ENCODE measurements at regions of chr12 and their contacts with region 1.

Region 1: DNA sequence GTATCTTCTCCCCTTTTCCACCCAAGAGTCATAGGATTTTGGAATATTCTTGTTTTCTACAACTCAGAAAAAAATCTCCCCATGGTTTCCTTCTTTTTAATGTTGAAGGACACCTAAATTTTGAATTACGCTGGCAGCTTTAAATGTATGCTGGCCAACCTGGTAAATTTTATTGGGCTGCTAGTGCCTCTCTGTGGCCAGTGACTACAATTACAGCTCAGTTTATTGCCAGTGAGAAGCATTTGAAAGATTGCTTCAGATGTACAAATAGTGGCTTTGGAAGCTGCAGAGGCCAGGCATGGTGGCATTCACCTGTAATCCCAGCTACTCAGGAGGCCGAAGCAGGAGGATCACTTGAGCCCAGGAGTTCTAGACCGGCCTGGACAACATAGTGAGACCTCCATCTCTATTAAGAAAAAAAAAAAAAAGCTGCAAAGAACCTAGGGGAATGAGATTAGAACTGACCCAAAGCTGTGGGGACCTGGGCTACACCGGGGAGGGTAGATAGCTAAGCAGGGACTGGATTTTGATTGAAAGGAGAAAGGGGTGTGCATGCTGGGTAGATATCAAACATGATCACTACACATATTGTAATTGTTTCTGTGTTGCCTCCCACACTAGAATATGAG is 7.6 kb upstream of the RAB21 start:
- DNase-seq: peak; percentile 23
- H3K4me3 ChIP-seq: no peak overlapping the region
- H3K27ac ChIP-seq: no peak overlapping the region
- H3K4me1 ChIP-seq: no peaks in the 10 kb centered on the region
- H3K27me3 ChIP-seq: no peaks in the 10 kb centered on the region
- CTCF ChIP-seq: peak; percentile 54 to 62 (median 58)
- POLR2A ChIP-seq: no peak

Region 2: DNA sequence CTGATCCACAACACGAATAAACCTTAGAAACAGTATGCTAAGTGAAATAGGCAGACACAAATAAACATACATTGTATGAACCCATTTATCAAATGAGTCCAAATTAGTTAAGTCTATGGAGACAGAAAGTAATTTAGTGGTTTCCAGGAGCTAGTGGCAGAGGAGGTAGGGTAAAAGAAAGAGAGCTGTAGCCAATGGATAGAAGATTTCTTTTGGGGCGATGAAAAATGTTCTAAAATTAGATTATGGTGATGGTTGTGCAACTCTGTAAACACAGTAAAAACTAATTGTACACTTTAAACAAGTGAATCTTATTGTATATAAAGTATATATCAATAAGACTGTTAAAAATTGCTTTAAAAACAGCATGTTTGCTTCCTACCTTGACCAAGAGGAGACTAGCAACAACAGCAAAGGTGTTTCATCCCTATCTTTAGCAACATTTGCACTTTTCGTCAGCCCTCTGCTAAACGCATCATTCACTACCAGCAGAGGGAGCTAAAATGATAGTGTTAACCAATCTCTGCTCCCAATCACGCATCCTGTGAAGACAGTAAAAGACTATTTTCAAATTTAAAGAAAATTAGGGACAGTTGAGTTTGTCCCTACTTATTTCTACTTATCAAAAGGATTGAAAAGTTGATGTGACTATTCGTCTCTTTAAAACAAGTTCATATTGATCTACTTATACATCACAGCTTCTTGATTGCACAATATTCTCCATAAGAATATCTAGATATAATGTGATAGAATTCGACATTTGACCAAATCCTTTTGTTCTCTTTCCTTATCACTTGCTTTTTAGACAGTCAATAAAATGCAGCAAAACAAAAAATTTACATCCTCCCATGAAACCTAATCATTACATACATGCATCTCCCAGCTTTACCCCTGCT is 331.5 kb before region 1 on chr12:
- intact Hi-C with region 1: loop called (anchors 10 kb)
- DNase-seq: peak; percentile 25
- H3K4me3 ChIP-seq: no peak overlapping the region
- H3K27ac ChIP-seq: no peak overlapping the region
- H3K4me1 ChIP-seq: no peaks in the 10 kb centered on the region
- H3K27me3 ChIP-seq: no peaks in the 10 kb centered on the region
- CTCF ChIP-seq: peak; percentile 21 to 69 (median 54)
- POLR2A ChIP-seq: no peak

Region 3: DNA sequence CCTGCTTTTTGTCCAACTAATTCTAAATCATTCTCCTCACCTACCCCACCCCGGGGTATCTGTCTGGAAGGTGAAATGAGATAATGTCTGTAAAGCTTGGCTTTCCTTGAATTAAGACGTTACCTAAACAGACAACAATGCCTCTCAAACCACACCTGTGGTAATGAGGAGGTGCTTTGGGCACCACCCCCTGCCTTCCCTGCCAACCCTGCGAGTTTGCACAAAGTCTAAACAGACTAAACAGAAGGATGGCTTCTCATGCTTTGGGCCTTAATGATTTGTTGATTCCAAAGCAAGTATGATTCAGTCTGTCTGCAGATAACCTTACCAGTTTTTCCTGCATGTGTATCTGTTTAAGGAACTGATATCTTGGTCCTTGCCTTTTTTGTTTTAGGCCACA is 165.9 kb before region 1 on chr12:
- intact Hi-C with region 1: no loop called
- DNase-seq: no peak
- H3K4me3 ChIP-seq: no peak overlapping the region
- H3K27ac ChIP-seq: no peak overlapping the region
- H3K4me1 ChIP-seq: no peaks in the 10 kb centered on the region
- H3K27me3 ChIP-seq: no peaks in the 10 kb centered on the region
- CTCF ChIP-seq: no peak
- POLR2A ChIP-seq: no peak

Region 4: GRCh38 chr12:71710276-71711125 is 36.6 kb before region 1 on chr12:
- intact Hi-C with region 1: no loop called
- DNase-seq: no peak
- H3K4me3 ChIP-seq: no peak overlapping the region
- H3K27ac ChIP-seq: no peak overlapping the region
- H3K4me1 ChIP-seq: no peaks in the 10 kb centered on the region
- H3K27me3 ChIP-seq: no peaks in the 10 kb centered on the region
- CTCF ChIP-seq: no peak
- POLR2A ChIP-seq: no peak

Region 5: DNA sequence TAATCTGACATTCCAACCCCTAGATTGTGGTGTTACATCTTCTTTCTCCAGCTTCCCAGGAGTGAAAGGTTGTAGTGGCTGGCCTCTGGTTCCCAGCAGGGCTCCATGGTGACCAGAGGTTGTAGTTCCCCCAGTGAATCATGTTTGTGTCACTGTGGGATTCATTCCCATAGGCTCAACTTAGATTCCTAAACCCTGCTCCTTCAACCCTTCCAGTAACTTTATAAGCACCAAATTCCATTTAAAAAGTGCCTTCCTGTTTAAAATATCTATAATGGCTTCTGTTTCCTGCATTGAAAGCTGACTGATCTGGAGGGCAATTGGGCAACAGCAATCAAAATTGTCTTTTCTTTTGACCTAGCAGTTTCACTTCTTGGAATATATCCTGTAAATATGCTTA is 52.0 kb after region 1 on chr12:
- intact Hi-C with region 1: no loop called
- DNase-seq: no peak
- H3K4me3 ChIP-seq: no peak overlapping the region
- H3K27ac ChIP-seq: no peak overlapping the region
- H3K4me1 ChIP-seq: no peaks in the 10 kb centered on the region
- H3K27me3 ChIP-seq: no peaks in the 10 kb centered on the region
- CTCF ChIP-seq: no peak
- POLR2A ChIP-seq: no peak

Measured in testis (tissue), 5 donors.